ENCODE measurements at regions of chr6 and their contacts with region 1.

Region 1: DNA sequence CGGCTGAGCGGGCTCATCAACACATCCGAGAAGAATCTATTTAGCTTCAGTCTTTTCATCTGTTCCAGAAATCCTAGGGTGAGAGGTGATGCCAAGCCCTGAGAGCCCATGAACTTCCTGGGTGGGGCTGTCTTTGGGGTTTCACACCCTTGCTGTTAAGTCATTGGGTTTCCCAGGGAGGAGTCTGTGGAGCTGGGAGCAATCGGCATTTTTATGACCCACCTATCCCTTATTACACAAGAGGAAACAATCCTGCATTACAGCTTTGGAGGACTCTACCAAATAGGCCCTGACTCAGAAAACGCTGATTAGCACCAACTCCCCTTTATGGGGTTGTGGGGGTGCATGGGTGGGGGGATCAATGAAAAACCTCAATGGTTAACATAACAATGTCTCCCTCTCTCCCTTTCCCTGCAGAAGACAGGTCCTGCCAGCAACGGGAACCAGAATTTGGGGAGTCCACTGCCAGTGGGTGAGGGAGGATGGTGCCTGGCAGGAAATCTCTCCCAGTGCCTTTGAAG is 46.3 kb downstream of the EZR start:
- DNase-seq: no peak
- H3K4me3 ChIP-seq: no peak overlapping the region
- H3K4me3 Mint-ChIP-seq: peak overlapping the region in 6 of 8 donors; percentile 49 to 73 (median 55)
- H3K27ac ChIP-seq: peak overlapping the region; percentile 29
- H3K27ac Mint-ChIP-seq: peak overlapping the region; percentile 90 to 94 (median 91)
- H3K4me1 ChIP-seq: peaks cover 42% of the 10 kb centered on the region
- H3K4me1 Mint-ChIP-seq: peaks cover 40 to 80% (median 52%) of the 10 kb centered on the region in 4 donors
- H3K27me3 ChIP-seq: no peaks in the 10 kb centered on the region
- H3K27me3 Mint-ChIP-seq: no peaks in the 10 kb centered on the region

Region 2: DNA sequence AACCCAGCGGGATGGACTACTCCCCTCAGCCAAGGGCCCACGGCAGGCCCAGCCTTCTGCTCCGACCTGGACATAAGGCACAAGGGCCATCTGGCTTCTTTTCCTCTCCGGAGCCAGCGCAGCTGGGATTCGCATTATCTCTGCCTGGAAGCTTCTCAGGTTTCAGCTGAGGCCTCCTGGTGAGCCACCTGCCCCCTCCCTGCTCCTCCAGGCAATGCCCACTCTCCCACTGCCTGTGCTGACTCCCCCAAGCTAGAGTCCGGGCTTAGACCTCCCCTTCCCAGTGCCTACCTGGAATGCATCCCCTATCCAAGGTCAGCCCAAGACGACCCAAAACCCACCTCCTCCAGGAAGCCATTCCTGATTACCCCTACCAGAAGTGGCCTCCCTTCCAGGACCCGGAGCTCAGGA is 14.5 kb before region 1 on chr6:
- CTCF ChIA-PET with region 1: interaction called, 4 read pairs
- POLR2A ChIA-PET with region 1: interaction called, 11 read pairs
- intact Hi-C with region 1: no loop called
- DNase-seq: no peak
- H3K4me3 ChIP-seq: no peak overlapping the region
- H3K4me3 Mint-ChIP-seq: no peak overlapping the region
- H3K27ac ChIP-seq: no peak overlapping the region
- H3K27ac Mint-ChIP-seq: peak overlapping the region in 3 of 7 donors; percentile 43 to 83 (median 53)
- H3K4me1 ChIP-seq: no peaks in the 10 kb centered on the region
- H3K4me1 Mint-ChIP-seq: peaks cover 0 to 6% (median 3%) of the 10 kb centered on the region in 4 donors
- H3K27me3 ChIP-seq: no peaks in the 10 kb centered on the region
- H3K27me3 Mint-ChIP-seq: no peaks in the 10 kb centered on the region

Region 3: DNA sequence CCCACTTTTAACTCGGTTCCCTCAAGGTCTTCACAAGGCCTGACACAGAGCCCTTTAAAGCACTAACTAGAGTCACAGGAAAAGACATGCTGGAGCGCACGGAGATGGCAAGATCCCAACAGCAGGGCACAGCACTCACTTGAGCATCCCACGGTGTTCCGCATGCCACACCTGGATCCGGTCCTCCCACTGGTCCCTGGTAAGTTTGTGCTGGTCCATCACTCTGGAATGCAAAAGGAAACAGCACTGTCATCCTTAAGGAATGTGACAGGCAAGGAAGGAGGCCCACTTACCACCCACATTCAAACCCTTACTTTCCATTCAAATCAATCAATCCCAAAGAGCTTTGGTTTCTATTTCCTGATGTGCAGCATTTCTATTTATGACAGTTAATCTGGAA is 11.6 kb after region 1 on chr6:
- CTCF ChIA-PET with region 1: no interaction called
- POLR2A ChIA-PET with region 1: interaction called, 10 read pairs
- intact Hi-C with region 1: no loop called
- DNase-seq: no peak
- H3K4me3 ChIP-seq: no peak overlapping the region
- H3K4me3 Mint-ChIP-seq: no peak overlapping the region
- H3K27ac ChIP-seq: no peak overlapping the region
- H3K27ac Mint-ChIP-seq: peak overlapping the region in 6 of 7 donors; percentile 25 to 82 (median 50)
- H3K4me1 ChIP-seq: peaks cover 27% of the 10 kb centered on the region
- H3K4me1 Mint-ChIP-seq: peaks cover 16 to 57% (median 30%) of the 10 kb centered on the region in 4 donors
- H3K27me3 ChIP-seq: no peaks in the 10 kb centered on the region
- H3K27me3 Mint-ChIP-seq: no peaks in the 10 kb centered on the region